GM12878 (cell line): ENCODE measurements at regions of chr6 and their contacts with region 1.

Region 1: GRCh38 chr6:159104163-159104925 is 59.6 kb upstream of the TAGAP start:
- DNase-seq: no peak
- ATAC-seq: peak; percentile 77
- H3K4me3 ChIP-seq: no peak overlapping the region
- H3K27ac ChIP-seq: no peak overlapping the region; the same call in 1 of the 2 replicates
- H3K4me1 ChIP-seq: peaks cover 37% of the 10 kb centered on the region
- H3K27me3 ChIP-seq: no peaks in the 10 kb centered on the region
- CTCF ChIP-seq: peak; percentile 97 to 99 (median 98); a peak in 5 of 6 replicates
- EP300 ChIP-seq: no peak
- POLR2A ChIP-seq: 0 out of 2 replicates have a peak, but pooled peaks have one; percentile 22
- RAD21 ChIP-seq: peak; percentile 96

Region 2: DNA sequence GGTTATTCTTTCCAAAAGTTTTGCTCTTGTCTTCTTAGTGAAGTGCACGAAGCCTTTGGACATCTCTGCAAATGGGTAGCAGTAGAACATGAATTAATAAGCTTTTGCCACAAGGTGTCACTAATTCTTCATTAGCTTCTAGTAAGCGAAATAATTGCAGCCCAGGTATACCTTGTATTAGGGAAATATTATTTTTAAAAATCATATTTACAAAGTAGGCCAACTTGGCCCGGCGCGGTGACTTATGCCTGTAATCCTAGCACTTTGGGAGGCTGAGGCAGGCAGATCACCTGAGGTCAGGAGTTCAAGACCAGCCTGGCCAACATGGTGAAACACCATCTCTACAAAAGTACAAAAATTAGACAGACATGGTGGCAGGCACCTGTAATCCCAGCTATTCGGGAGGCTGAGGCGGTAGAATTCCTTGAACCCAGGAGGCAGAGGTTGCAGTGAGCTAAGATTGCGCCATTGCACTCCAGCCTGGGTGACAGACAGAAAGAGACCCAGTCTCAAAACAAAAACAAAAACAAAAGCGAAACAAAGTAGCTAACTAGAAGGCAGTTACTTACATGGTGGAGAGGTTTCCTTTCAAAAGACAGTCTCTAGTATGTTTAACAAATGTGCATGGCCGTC is 95.6 kb before region 1 on chr6:
- CTCF ChIA-PET with region 1: interaction called, 631 read pairs
- POLR2A ChIA-PET with region 1: interaction called, 27 read pairs
- RAD21 ChIA-PET with region 1: interaction called, 259 read pairs
- SMC1A ChIA-PET with region 1: interaction called, 517 read pairs
- in situ Hi-C with region 1: loop called (anchors 5 kb)
- intact Hi-C with region 1: loop called (anchors 1 kb)
- DNase-seq: no peak
- ATAC-seq: peak; percentile 91
- H3K4me3 ChIP-seq: peak overlapping the region; percentile 60
- H3K27ac ChIP-seq: peak overlapping the region; percentile 58
- H3K4me1 ChIP-seq: no peaks in the 10 kb centered on the region
- H3K27me3 ChIP-seq: no peaks in the 10 kb centered on the region
- CTCF ChIP-seq: peak; percentile 50 to 70 (median 60); a peak in 5 of 6 replicates
- EP300 ChIP-seq: no peak
- POLR2A ChIP-seq: no peak
- RAD21 ChIP-seq: peak; percentile 78

Region 3: GRCh38 chr6:159033160-159034049 is 70.9 kb before region 1 on chr6:
- CTCF ChIA-PET with region 1: interaction called, 481 read pairs
- POLR2A ChIA-PET with region 1: interaction called, 79 read pairs
- RAD21 ChIA-PET with region 1: interaction called, 298 read pairs
- SMC1A ChIA-PET with region 1: interaction called, 415 read pairs
- in situ Hi-C with region 1: no loop called
- intact Hi-C with region 1: no loop called
- DNase-seq: no peak
- ATAC-seq: peak; percentile 50
- H3K4me3 ChIP-seq: no peak overlapping the region
- H3K27ac ChIP-seq: no peak overlapping the region
- H3K4me1 ChIP-seq: peaks cover 8% of the 10 kb centered on the region
- H3K27me3 ChIP-seq: no peaks in the 10 kb centered on the region
- CTCF ChIP-seq: no peak
- EP300 ChIP-seq: no peak
- POLR2A ChIP-seq: no peak
- RAD21 ChIP-seq: no peak

Region 4: GRCh38 chr6:159062564-159062945 is 41.8 kb before region 1 on chr6:
- CTCF ChIA-PET with region 1: interaction called, 7 read pairs
- POLR2A ChIA-PET with region 1: no interaction called
- RAD21 ChIA-PET with region 1: interaction called, 8 read pairs
- SMC1A ChIA-PET with region 1: interaction called, 13 read pairs
- in situ Hi-C with region 1: no loop called
- intact Hi-C with region 1: no loop called
- DNase-seq: no peak
- ATAC-seq: peak; percentile 67
- H3K4me3 ChIP-seq: no peak overlapping the region
- H3K27ac ChIP-seq: no peak overlapping the region
- H3K4me1 ChIP-seq: peaks cover 11% of the 10 kb centered on the region
- H3K27me3 ChIP-seq: peaks cover 0 to 4% of the 10 kb centered on the region in 2 experiments; a peak in 1 of 4 replicates
- CTCF ChIP-seq: no peak
- EP300 ChIP-seq: no peak
- POLR2A ChIP-seq: no peak
- RAD21 ChIP-seq: no peak

Region 5: DNA sequence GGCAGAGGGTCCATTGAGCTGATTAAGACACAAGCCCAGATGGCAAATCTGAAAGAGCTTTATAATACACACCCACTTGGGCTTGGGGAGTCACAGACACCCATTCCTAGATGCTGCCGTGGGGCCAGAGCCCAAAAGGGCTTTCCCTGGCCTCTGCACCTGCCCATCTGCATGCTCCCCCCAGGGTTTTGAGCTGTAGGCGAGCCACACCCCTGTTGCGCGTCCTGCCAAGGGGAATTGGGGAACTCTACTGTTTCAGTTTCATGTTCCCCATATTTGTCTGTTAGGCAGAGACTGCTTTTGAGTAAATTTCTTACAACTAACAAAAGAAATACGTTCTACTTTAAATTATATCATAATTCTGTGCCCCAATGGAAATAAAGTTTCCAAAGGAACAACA is 12.0 kb after region 1 on chr6:
- CTCF ChIA-PET with region 1: interaction called, 63 read pairs
- POLR2A ChIA-PET with region 1: interaction called, 18 read pairs
- RAD21 ChIA-PET with region 1: interaction called, 57 read pairs
- SMC1A ChIA-PET with region 1: interaction called, 37 read pairs
- in situ Hi-C with region 1: no loop called
- intact Hi-C with region 1: no loop called
- DNase-seq: no peak
- ATAC-seq: peak; percentile 82
- H3K4me3 ChIP-seq: no peak overlapping the region
- H3K27ac ChIP-seq: no peak overlapping the region
- H3K4me1 ChIP-seq: peaks cover 31% of the 10 kb centered on the region
- H3K27me3 ChIP-seq: peaks cover 0 to 3% of the 10 kb centered on the region in 2 experiments; a peak in 1 of 4 replicates
- CTCF ChIP-seq: no peak
- EP300 ChIP-seq: peak in 1 of 2 experiments; percentile 47; a peak in 2 of 4 replicates
- POLR2A ChIP-seq: no peak
- RAD21 ChIP-seq: no peak

Region 6: DNA sequence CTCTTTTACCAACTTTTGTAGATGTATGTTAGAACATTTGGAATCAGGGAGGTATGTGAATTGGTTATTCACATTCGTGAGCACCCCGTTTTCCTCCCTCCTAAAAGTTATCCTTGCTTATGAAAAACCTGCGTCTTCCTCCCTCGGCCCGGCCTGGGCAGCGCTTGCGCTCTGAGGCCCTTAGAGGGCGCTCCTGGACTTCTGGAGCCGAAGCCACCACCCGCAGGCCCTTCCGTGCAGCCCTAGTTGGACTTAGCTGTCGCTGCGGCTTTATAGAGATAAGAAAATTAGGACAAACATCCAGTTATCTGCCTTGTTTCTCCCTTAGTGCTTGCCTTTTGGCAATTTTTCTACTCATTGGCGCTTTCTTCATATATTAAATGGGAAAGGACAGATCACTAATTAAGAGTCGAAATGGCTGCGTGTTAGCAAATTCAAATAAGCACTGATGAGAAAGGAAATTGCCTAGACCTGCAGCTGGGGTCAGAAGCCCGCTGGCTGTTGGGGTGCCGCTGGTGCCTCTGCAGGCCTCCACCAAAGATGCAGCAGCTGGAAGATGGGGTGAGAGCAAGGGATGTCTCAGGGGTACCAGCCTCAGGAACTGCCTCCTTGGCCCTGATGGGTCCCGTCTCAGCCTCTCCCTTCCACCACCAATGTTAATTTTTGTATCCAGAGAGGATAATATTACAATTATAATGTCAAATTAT is 70.1 kb after region 1 on chr6:
- CTCF ChIA-PET with region 1: no interaction called
- POLR2A ChIA-PET with region 1: no interaction called
- RAD21 ChIA-PET with region 1: no interaction called
- SMC1A ChIA-PET with region 1: no interaction called
- in situ Hi-C with region 1: no loop called
- intact Hi-C with region 1: no loop called
- DNase-seq: peak; percentile 2
- ATAC-seq: peak; percentile 98
- H3K4me3 ChIP-seq: no peak overlapping the region
- H3K27ac ChIP-seq: no peak overlapping the region
- H3K4me1 ChIP-seq: no peaks in the 10 kb centered on the region
- H3K27me3 ChIP-seq: peaks cover 8 to 19% of the 10 kb centered on the region in 2 experiments
- CTCF ChIP-seq: peak; percentile 91 to 96 (median 96)
- EP300 ChIP-seq: no peak
- POLR2A ChIP-seq: no peak
- RAD21 ChIP-seq: peak; percentile 96